Natural killer cell (primary cell): ENCODE measurements at regions of chr7 and their contacts with region 1.

Region 1: DNA sequence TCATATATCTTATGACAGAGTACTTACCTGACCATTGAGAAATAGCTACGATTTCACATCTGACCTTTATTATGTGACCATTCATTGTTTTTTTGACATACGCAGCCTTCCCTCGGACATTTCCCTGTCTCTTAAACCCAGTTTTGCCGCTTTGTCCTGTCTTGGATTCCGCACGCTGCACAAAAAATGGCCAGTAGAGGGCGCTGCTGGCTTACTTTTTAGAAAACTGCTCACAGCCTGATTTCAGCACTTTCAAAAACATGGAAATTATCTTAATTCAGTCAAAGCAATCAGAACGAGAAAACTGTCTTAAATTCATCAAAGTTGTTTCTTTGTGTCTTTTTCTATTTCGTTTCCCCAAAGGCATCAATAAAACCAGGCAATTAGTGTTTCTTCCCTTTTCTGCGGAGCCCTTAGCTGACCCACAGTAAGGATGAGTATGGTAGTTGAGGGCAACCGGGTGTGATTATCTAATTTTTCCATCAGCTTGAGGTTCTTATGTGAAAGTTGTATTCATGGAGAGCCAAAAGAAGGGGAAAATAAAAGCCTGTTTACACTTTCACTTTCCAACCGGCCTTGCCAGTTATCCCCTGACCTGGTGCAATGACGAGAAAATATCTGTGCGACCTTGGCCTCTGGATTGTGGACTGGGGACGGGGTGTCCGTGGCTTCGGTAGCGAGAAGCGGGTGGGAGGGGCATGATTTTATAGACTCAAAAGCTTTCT is 144.4 kb downstream of the DYNC1I1 start:
- DNase-seq: peak; percentile 60 to 78
- ATAC-seq: peak; percentile 36 to 76 (median 65)
- H3K4me3 ChIP-seq: no peak overlapping the region
- H3K4me3 Mint-ChIP-seq: peak overlapping the region; percentile 67
- H3K27ac ChIP-seq: no peak overlapping the region
- H3K27ac Mint-ChIP-seq: no peak overlapping the region
- H3K4me1 ChIP-seq: no peaks in the 10 kb centered on the region
- H3K4me1 Mint-ChIP-seq: peaks cover 11 to 14% of the 10 kb centered on the region in 2 donors
- H3K27me3 ChIP-seq: no peaks in the 10 kb centered on the region
- H3K27me3 Mint-ChIP-seq: peaks cover 6% of the 10 kb centered on the region in 2 donors
- CTCF ChIP-seq: peak; percentile 97

Region 2: GRCh38 chr7:97064967-97065587 is 1148.3 kb after region 1 on chr7:
- intact Hi-C with region 1: loop called (anchors 1 kb)
- DNase-seq: peak in 1 of 2 donors; percentile 72
- ATAC-seq: peak; percentile 44 to 81 (median 74)
- H3K4me3 ChIP-seq: no peak overlapping the region
- H3K4me3 Mint-ChIP-seq: no peak overlapping the region
- H3K27ac ChIP-seq: no peak overlapping the region
- H3K27ac Mint-ChIP-seq: no peak overlapping the region
- H3K4me1 ChIP-seq: no peaks in the 10 kb centered on the region
- H3K4me1 Mint-ChIP-seq: no peaks in the 10 kb centered on the region
- H3K27me3 ChIP-seq: no peaks in the 10 kb centered on the region
- H3K27me3 Mint-ChIP-seq: peaks cover 6 to 8% of the 10 kb centered on the region in 2 donors
- CTCF ChIP-seq: peak; percentile 64

Region 3: DNA sequence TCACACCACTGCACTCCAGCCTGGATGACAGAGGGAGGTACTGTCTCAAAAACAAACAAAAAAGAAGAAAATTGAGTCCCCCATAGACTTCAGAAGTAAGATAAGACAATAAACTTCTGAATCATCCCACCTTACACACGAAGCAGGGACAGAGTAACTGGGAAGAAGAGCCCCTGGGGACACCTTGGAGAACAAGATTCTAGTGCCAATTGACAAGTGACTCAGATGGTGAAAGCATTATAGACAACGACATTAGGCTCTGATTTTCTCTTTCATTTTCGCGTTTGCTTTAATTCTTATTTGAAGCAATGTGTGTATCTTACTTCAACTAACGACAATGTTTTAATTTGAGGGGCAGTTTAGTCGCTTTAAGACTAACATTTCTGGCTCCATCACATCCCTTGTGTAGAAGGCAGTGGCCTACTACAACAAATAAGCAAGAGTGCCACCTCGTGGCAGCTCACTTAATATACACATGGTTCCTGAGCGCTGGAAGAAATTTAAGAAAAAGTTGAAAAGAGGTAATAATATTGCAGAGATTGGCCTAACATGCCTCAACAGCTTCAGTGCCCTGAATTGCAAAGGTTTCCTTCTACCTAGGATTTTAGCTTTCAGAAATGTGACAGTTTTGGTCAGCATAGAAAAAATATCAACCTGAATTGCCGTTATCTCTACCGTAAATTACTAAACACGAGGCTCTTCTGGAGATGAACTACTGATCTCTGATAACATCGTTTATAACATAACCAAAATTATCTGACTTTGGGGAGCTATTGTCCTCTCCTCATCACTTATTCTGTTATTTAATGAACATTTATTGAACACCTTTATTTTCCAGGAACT is 1918.8 kb after region 1 on chr7:
- intact Hi-C with region 1: loop called (anchors 2 kb)
- DNase-seq: peak; percentile 33 to 71
- ATAC-seq: peak; percentile 52 to 82 (median 73)
- H3K4me3 ChIP-seq: no peak overlapping the region
- H3K4me3 Mint-ChIP-seq: no peak overlapping the region
- H3K27ac ChIP-seq: no peak overlapping the region
- H3K27ac Mint-ChIP-seq: no peak overlapping the region
- H3K4me1 ChIP-seq: no peaks in the 10 kb centered on the region
- H3K4me1 Mint-ChIP-seq: no peaks in the 10 kb centered on the region
- H3K27me3 ChIP-seq: no peaks in the 10 kb centered on the region
- H3K27me3 Mint-ChIP-seq: peaks cover 20 to 48% of the 10 kb centered on the region in 2 donors
- CTCF ChIP-seq: peak; percentile 69